ENCODE measurements at regions of chr7 and their contacts with region 1.

Region 1: GRCh38 chr7:55132890-55133551 is 114.2 kb downstream of the EGFR start:
- DNase-seq: peak; percentile 98
- ATAC-seq: peak; percentile 76
- H3K4me3 ChIP-seq: peak overlapping the region; percentile 26; the same call in 1 of the 2 replicates
- H3K27ac ChIP-seq: peak overlapping the region; percentile 99
- H3K4me1 ChIP-seq: peaks cover 79% of the 10 kb centered on the region
- H3K27me3 ChIP-seq: no peaks in the 10 kb centered on the region
- CTCF ChIP-seq: no peak

Region 2: GRCh38 chr7:54788664-54789063 is 344.4 kb before region 1 on chr7:
- CTCF ChIA-PET with region 1: interaction called, 6 read pairs
- POLR2A ChIA-PET with region 1: no interaction called
- intact Hi-C with region 1: loop called (anchors 5 kb)
- DNase-seq: peak; percentile 95
- ATAC-seq: peak; percentile 95
- H3K4me3 ChIP-seq: 0 out of 2 replicates have a peak overlapping the region, but pooled peaks have one; percentile 20
- H3K27ac ChIP-seq: peak overlapping the region; percentile 60
- H3K4me1 ChIP-seq: peaks cover 22% of the 10 kb centered on the region
- H3K27me3 ChIP-seq: no peaks in the 10 kb centered on the region
- CTCF ChIP-seq: peak; percentile 87

Region 3: GRCh38 chr7:54995631-54996340 is 137.2 kb before region 1 on chr7:
- CTCF ChIA-PET with region 1: no interaction called
- POLR2A ChIA-PET with region 1: no interaction called
- intact Hi-C with region 1: loop called (anchors 1 kb)
- DNase-seq: peak; percentile 96
- ATAC-seq: peak; percentile 94
- H3K4me3 ChIP-seq: peak overlapping the region; percentile 9; the same call in 1 of the 2 replicates
- H3K27ac ChIP-seq: peak overlapping the region; percentile 91
- H3K4me1 ChIP-seq: peaks cover 28% of the 10 kb centered on the region
- H3K27me3 ChIP-seq: no peaks in the 10 kb centered on the region
- CTCF ChIP-seq: no peak

Region 4: GRCh38 chr7:55073945-55074499 is 59.0 kb before region 1 on chr7:
- CTCF ChIA-PET with region 1: no interaction called
- POLR2A ChIA-PET with region 1: no interaction called
- intact Hi-C with region 1: loop called (anchors 1 kb)
- DNase-seq: peak; percentile 98
- ATAC-seq: peak; percentile 98
- H3K4me3 ChIP-seq: peak overlapping the region; percentile 48; the same call in 1 of the 2 replicates
- H3K27ac ChIP-seq: peak overlapping the region; percentile 97
- H3K4me1 ChIP-seq: peaks cover 38% of the 10 kb centered on the region
- H3K27me3 ChIP-seq: no peaks in the 10 kb centered on the region
- CTCF ChIP-seq: no peak

Region 5: GRCh38 chr7:55094092-55094690 is 38.8 kb before region 1 on chr7:
- CTCF ChIA-PET with region 1: no interaction called
- POLR2A ChIA-PET with region 1: no interaction called
- intact Hi-C with region 1: no loop called
- DNase-seq: no peak
- ATAC-seq: no peak
- H3K4me3 ChIP-seq: no peak overlapping the region
- H3K27ac ChIP-seq: no peak overlapping the region
- H3K4me1 ChIP-seq: no peaks in the 10 kb centered on the region
- H3K27me3 ChIP-seq: no peaks in the 10 kb centered on the region
- CTCF ChIP-seq: no peak

Region 6: DNA sequence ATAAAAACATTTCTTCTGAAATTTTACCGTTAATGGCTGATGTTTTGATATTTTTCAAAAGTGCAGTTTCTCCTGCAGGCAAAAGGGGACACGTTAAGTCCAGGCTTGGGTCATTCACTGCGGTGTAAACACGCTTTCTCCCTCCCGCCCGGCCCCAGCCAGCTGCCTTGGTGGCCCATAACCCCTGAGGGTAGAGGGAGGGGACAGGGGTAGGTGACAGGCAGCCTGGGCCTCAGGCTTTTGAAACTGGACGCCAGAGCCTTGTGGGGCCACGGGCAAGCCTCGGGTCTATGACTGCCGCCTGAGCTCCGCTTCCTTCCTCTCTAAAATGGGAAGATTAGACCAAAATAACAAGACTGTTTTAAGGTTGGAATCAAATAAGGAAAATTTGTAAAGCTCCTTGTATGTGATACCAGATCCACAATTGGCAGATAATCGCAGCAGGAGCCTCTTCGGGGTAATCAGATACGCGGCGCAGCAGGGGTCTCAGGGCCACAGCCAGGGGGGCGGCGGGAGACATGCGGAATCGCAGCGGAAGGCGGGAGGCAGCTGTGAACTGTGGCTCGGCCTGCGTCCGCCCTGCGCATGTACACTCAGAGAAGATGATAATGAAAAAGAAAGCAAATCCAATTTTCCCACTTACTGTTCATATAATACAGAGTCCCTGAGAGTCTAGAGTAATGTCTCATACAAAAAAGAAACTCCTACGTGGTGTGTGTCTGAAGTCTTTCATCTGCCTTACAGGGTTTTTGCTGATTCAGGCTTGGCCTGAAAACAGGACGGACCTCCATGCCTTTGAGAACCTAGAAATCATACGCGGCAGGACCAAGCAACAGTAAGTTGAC is 24.1 kb after region 1 on chr7:
- CTCF ChIA-PET with region 1: no interaction called
- POLR2A ChIA-PET with region 1: interaction called, 5 read pairs
- intact Hi-C with region 1: loop called (anchors 2 kb)
- DNase-seq: no peak
- ATAC-seq: no peak
- H3K4me3 ChIP-seq: no peak overlapping the region
- H3K27ac ChIP-seq: peak overlapping the region; percentile 86
- H3K4me1 ChIP-seq: peaks cover 40% of the 10 kb centered on the region
- H3K27me3 ChIP-seq: no peaks in the 10 kb centered on the region
- CTCF ChIP-seq: no peak

Measured in PC-3 (cell line).